B cell (primary cell): ENCODE measurements at regions of chr4 and their contacts with region 1.

Region 1: DNA sequence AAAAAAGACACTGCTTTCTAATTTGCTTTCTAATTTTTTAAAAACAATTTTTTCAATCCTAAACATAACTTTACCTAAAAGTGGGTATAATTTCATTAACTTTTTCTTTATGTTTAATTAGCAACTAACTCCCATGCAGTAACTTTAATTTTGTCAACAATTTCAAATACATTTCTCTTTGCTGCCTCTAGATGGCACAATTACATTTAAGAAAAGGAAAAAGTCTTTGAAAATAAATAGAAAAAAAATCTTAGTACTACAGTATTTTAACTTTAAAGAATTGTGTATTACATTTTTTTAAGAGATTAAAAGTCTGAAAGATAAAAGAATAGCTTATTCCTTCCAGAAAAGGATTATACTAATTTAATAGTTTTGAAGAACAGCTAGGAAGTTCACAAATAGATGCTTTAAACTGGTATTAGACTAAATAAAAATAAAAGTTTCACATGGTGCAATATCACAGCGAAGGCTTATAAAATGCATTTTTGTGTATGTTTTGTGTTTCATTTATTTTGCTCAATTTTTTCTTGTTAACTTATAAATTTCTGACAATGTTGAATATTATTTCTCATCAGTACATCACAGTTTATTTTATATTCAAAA is 105.1 kb downstream of the ADGRA3 start:
- DNase-seq: no peak
- ATAC-seq: no peak
- H3K4me3 ChIP-seq: no peak overlapping the region
- H3K4me3 Mint-ChIP-seq: no peak overlapping the region
- H3K27ac ChIP-seq: no peak overlapping the region
- H3K27ac Mint-ChIP-seq: no peak overlapping the region
- H3K4me1 ChIP-seq: no peaks in the 10 kb centered on the region
- H3K4me1 Mint-ChIP-seq: no peaks in the 10 kb centered on the region
- H3K27me3 ChIP-seq: no peaks in the 10 kb centered on the region
- H3K27me3 Mint-ChIP-seq: no peaks in the 10 kb centered on the region
- CTCF ChIP-seq: peak; percentile 74

Region 2: DNA sequence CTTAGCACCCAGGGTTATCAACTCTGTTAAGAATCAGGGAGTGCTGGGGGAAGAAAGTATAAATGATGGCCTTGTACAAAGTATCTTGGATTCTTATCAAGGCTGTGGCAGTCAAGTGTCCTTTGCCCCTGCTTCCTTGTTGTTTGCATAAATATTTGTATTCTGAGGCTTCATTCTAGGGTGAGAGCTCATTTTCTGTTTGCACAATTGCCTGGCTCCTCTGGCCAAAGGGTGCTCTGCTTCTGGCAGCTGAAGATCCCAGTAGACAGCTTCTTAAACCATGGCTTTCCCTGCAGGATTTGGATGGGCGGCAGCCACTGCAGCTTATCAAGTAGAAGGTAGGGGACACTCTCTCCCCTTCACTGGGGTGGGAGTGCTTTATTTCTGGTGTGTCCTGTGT is 282.0 kb after region 1 on chr4 and contains the start of gene GBA3:
- CTCF ChIA-PET with region 1: interaction called, 4 read pairs
- POLR2A ChIA-PET with region 1: no interaction called
- intact Hi-C with region 1: loop called (anchors 10 kb)
- DNase-seq: no peak
- ATAC-seq: no peak
- H3K4me3 ChIP-seq: no peak within 1 kb of the TSS
- H3K4me3 Mint-ChIP-seq: no peak within 1 kb of the TSS
- H3K27ac ChIP-seq: no peak within 1 kb of the TSS
- H3K27ac Mint-ChIP-seq: no peak within 1 kb of the TSS
- H3K4me1 ChIP-seq: no peaks in the 10 kb centered on the region
- H3K4me1 Mint-ChIP-seq: no peaks in the 10 kb centered on the region
- H3K27me3 ChIP-seq: no peaks in the 10 kb centered on the region
- H3K27me3 Mint-ChIP-seq: no peaks in the 10 kb centered on the region
- CTCF ChIP-seq: no peak
- total RNA-seq, gene GBA3: not detected in 2 replicates